ENCODE measurements at regions of chr21 and their contacts with region 1.

Region 1: DNA sequence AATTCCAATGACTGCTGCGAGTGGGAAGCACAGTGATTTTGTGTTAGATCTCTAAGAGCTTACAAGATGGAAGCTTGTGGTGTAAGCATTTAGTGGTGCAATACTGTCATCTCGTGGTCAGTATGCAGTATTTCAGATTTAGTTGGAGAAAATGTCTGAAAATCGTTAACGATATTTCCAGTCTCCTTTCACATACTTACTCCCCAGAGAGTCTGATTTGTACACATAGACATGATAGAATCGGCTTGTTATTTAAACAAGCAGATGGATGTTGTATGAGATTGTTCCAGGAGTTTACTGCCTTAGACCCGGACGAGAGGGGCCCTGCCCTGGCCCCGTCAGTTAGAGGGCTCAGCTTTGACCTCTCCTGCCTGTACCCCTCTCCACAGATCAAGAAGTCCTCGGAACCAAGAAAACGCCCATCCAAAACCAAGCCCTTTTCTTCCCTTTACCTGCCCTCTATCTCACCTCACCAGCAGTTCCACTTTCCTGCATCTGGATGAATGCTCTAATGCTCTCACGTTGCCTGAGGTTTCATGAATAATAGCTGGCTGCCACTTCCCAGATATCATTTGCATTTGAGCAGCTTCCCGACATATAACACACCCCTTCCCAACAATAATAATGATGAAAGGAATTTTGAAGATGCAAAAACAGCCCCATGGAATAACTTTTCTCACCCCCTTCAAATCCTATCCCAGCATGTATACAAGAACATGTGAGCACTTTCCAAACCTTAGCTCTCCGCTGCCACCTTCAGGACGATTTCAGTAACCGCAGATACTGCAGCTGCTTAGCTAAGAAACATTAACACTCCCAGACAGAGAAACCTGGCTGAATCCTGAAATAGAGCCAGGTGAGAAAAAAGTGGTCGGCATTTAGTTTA is 247.3 kb downstream of the LTN1 start:
- DNase-seq: peak; percentile 65
- H3K4me3 ChIP-seq: peak overlapping the region; percentile 21 to 52 (median 47)
- H3K27ac ChIP-seq: peak overlapping the region; percentile 21
- H3K4me1 ChIP-seq: no peaks in the 10 kb centered on the region
- H3K27me3 ChIP-seq: no peaks in the 10 kb centered on the region
- CTCF ChIP-seq: peak; percentile 97 to 98

Region 2: GRCh38 chr21:26850108-26850643 is 1895.2 kb before region 1 on chr21:
- CTCF ChIA-PET with region 1: interaction called, 4 read pairs
- dilution Hi-C with region 1: no loop called
- in situ Hi-C with region 1: loop called (anchors 10 to 25 kb)
- intact Hi-C with region 1: loop called (anchors 1 kb)
- DNase-seq: peak; percentile 32
- H3K4me3 ChIP-seq: peak overlapping the region in 1 of 3 experiments; percentile 13
- H3K27ac ChIP-seq: no peak overlapping the region
- H3K4me1 ChIP-seq: peaks cover 12% of the 10 kb centered on the region
- H3K27me3 ChIP-seq: no peaks in the 10 kb centered on the region
- CTCF ChIP-seq: peak; percentile 31 to 50

Region 3: DNA sequence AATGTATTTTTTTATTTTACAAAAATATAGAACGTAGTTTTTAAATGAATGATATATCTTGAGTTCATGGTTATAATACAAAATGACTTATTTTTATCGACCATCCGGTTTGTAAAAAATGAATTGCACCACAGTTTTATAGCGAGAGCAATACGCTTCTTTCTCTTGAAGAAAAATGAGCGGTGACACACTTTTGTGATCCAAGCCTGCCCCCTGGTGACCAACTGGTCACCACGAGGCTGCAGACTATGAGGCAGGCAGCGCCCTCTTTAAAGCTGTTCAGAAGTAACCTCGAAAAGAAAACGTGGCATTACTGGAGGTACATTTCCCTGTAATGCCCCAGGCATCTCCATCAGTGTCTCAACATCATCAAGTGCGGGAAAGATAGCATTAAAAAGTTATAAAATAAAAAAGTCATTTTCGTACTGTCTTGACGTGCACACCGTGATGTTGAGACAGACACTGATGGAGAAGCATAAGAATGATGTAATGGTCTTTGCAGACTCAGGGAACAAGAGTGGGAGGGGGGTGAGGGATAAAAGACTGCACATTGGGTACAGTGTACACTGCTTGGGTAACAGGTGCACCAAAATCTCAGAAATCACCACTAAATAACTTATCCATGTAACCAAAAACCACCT is 1044.3 kb before region 1 on chr21:
- CTCF ChIA-PET with region 1: interaction called, 4 read pairs
- dilution Hi-C with region 1: no loop called
- in situ Hi-C with region 1: loop called (anchors 10 to 25 kb)
- intact Hi-C with region 1: loop called (anchors 1 kb)
- DNase-seq: peak; percentile 77
- H3K4me3 ChIP-seq: no peak overlapping the region
- H3K27ac ChIP-seq: no peak overlapping the region
- H3K4me1 ChIP-seq: no peaks in the 10 kb centered on the region
- H3K27me3 ChIP-seq: no peaks in the 10 kb centered on the region
- CTCF ChIP-seq: peak; percentile 76 to 92

Region 4: DNA sequence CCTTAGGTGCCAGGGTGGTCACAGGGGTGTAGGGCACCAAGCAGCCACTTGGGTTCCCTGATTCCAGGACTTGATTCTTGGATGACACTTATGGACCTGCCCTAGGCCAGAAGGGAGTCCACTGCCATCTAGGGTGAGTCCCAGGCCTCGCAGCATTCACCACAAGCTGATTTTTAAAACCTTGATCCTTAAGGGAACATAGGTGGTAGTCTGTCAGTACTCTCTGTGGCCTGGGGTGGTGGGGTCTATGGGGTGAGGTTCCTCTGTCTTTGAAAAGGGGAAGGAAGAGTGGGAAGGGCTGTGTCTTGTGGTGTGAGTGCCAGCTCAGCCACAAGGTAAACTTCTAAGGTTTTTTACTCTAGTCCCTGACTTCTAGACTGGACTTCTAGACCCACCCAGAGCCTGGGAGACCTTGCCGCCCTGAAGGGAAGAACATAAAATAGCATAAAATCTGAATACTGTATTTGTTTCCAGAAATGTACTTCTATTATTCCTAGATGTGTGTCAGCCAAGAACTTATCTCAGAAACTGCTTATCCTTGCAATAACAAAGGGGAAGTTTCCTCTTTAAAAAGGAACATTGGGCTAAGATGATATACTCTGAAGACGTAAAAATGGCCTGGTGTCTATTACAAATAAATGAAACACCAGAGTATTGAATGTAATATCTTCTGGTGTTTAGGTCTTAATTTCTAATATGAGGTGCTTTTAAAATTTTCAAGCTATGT is 510.0 kb before region 1 on chr21:
- CTCF ChIA-PET with region 1: no interaction called
- dilution Hi-C with region 1: no loop called
- in situ Hi-C with region 1: no loop called
- intact Hi-C with region 1: no loop called
- DNase-seq: no peak
- H3K4me3 ChIP-seq: no peak overlapping the region
- H3K27ac ChIP-seq: no peak overlapping the region
- H3K4me1 ChIP-seq: no peaks in the 10 kb centered on the region
- H3K27me3 ChIP-seq: no peaks in the 10 kb centered on the region
- CTCF ChIP-seq: peak in 1 of 2 donors; percentile 31

Region 5: GRCh38 chr21:28336314-28336713 is 409.1 kb before region 1 on chr21:
- CTCF ChIA-PET with region 1: interaction called, 6 read pairs
- dilution Hi-C with region 1: no loop called
- in situ Hi-C with region 1: loop called in 1 of 2 experiments (anchors 10 kb)
- intact Hi-C with region 1: loop called (anchors 1 kb)
- DNase-seq: peak; percentile 29
- H3K4me3 ChIP-seq: no peak overlapping the region
- H3K27ac ChIP-seq: no peak overlapping the region
- H3K4me1 ChIP-seq: no peaks in the 10 kb centered on the region
- H3K27me3 ChIP-seq: no peaks in the 10 kb centered on the region
- CTCF ChIP-seq: peak; percentile 46 to 51

Region 6: GRCh38 chr21:28633839-28634555 is 111.4 kb before region 1 on chr21:
- CTCF ChIA-PET with region 1: no interaction called
- dilution Hi-C with region 1: no loop called
- in situ Hi-C with region 1: no loop called
- intact Hi-C with region 1: loop called (anchors 2 kb)
- DNase-seq: peak; percentile 89
- H3K4me3 ChIP-seq: no peak overlapping the region
- H3K27ac ChIP-seq: peak overlapping the region; percentile 98
- H3K4me1 ChIP-seq: peaks cover 66% of the 10 kb centered on the region
- H3K27me3 ChIP-seq: no peaks in the 10 kb centered on the region
- CTCF ChIP-seq: no peak